Activated CD8-positive, alpha-beta T cell treated with anti-CD3 and anti-CD28 coated beads for 36 hours (primary cell): ENCODE measurements at regions of chr19 and their contacts with region 1.

Region 1: DNA sequence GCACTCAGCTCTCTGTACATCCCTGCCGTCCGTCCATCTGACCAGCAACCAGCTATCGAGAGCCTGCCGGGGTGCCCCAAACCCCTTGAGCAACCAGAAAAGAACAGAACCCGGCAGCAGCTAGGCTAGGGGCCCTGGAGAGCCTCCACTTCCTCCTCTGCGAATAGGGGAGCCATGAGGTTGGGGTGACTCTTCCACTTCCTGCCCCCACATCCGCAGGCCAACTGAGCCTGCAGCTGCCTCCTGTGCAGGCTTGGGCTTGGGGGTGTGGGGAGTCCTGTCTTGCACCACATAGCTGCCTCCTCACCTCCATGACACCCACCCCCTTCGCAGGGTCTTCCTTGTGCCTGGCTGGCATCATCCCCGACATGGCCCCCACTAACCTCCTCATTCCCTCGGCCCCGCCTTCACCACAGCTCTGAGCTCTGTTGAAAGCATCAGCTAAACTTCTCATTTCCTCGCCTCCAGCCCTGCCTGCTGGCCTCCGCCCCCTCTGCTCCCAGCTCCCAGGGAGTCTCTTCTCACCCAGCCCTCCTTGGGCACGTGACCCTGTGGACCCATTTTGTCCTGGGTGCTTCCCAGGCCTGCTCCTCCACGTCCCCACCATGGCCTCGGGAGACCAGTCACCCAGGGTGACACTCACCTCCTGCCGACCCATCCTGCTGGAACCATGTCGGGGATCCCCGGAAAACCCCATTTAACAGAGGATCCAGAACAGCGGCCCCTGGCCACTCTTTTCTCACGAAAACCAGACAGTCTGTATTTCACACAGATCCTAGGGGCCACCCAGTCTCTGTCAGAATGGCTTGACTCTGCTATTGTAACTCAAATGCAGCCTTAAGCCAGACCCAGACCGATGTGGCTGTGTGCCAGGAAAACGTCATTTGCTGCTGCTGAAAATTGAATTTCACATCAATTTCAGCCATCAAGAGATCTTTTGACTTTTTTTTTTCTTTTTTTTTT is 50.4 kb downstream of the MYO9B start:
- DNase-seq: peak; percentile 84
- ATAC-seq: peak; percentile 87
- H3K4me3 Mint-ChIP-seq: peak overlapping the region; percentile 63
- H3K27ac Mint-ChIP-seq: peak overlapping the region; percentile 91
- H3K4me1 Mint-ChIP-seq: peaks cover 42% of the 10 kb centered on the region
- H3K27me3 Mint-ChIP-seq: no peaks in the 10 kb centered on the region
- CTCF ChIP-seq: no peak

Region 2: DNA sequence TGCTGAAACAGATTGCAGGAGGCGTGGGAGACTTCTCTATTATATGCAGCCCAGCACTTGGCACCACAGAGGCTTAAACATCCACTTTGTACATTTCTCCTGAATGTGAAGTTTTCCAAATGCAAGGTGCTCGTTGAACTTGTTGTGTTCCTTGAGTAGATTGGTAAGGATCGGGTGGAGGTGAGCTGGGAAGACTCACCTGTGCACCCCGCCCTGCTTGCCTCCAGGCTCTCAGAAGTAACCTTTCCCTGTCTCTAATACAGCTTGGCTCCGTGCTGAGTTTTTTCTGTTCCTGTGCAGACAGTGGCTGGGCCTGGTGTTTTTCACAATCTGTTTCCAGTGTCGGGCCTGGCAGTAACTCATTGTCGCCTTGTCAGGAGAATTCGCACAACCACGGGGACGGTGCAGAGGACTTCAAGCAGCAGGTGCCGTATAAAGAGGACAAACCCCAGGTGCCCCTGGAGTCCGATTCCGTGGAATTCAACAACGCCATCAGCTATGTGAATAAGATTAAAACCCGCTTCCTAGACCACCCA is 284.5 kb before region 1 on chr19:
- CTCF ChIA-PET with region 1: no interaction called
- POLR2A ChIA-PET with region 1: no interaction called
- intact Hi-C with region 1: no loop called
- DNase-seq: no peak
- ATAC-seq: no peak
- H3K4me3 Mint-ChIP-seq: no peak overlapping the region
- H3K27ac Mint-ChIP-seq: no peak overlapping the region
- H3K4me1 Mint-ChIP-seq: peaks cover 6% of the 10 kb centered on the region
- H3K27me3 Mint-ChIP-seq: no peaks in the 10 kb centered on the region
- CTCF ChIP-seq: no peak

Region 3: GRCh38 chr19:17090583-17090982 is 35.4 kb before region 1 on chr19:
- CTCF ChIA-PET with region 1: interaction called, 3 read pairs
- POLR2A ChIA-PET with region 1: no interaction called
- intact Hi-C with region 1: loop called (anchors 5 kb)
- DNase-seq: peak; percentile 82
- ATAC-seq: peak; percentile 92
- H3K4me3 Mint-ChIP-seq: peak overlapping the region; percentile 4
- H3K27ac Mint-ChIP-seq: peak overlapping the region; percentile 85
- H3K4me1 Mint-ChIP-seq: peaks cover 46% of the 10 kb centered on the region
- H3K27me3 Mint-ChIP-seq: no peaks in the 10 kb centered on the region
- CTCF ChIP-seq: no peak

Region 4: DNA sequence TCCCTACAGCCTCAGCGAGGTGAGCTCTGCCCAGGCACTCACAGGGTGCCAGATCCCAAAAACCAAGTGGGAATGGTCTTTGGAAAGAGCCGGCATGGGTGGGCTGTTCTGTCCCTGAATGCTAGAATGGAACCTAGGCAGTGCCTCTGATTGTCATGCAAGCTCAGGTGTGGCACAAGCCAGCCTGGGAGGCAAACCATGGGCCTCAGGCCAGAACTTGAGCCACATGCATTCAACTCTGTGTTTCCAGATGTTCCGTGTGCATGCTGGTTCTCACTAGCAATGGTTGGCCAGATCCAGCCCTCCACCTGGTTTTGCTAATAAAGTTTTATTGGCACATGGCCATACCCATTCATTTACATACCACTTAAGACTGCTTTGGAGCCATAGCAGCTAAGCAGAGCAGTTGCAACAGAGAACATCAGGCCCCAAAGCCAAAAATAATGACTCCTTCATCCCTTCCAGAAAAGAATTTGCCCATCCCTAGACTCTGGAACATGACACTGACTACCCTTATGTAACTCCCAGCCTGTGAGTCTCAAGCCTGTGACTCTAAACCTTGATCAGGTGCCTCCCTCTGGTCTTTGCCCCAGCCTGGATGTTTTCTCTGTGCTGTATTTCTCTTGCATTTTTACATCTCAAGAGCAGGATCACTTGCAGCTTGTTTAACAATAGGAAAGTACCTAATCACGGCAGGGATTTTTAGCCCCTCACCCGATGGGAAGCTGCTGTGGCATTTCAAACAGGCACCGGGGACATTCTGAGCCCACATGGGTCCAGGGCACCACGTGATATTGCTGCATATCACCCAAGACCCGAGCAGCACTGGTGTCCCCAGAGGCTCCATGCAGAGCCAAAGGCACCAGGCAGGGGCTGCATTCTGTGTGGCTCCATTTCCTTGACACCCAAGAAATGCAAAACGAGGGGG is 33.7 kb after region 1 on chr19:
- CTCF ChIA-PET with region 1: no interaction called
- POLR2A ChIA-PET with region 1: no interaction called
- intact Hi-C with region 1: no loop called
- DNase-seq: no peak
- ATAC-seq: no peak
- H3K4me3 Mint-ChIP-seq: no peak overlapping the region
- H3K27ac Mint-ChIP-seq: no peak overlapping the region
- H3K4me1 Mint-ChIP-seq: no peaks in the 10 kb centered on the region
- H3K27me3 Mint-ChIP-seq: no peaks in the 10 kb centered on the region
- CTCF ChIP-seq: no peak

Region 5: DNA sequence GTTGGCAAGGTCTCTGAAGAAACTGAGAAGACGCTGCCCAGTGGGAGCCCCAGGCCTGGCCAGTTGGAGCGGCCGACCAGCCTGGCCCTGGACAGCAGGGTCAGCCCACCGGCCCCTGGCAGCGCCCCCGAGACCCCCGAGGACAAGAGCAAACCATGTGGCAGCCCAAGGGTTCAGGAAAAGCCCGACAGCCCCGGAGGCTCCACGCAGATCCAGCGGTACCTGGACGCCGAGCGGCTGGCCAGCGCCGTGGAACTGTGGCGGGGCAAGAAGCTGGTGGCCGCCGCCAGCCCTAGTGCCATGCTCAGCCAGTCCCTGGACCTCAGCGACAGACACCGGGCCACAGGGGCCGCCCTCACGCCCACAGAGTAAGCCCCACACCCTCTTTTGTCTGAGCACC is 69.1 kb after region 1 on chr19:
- CTCF ChIA-PET with region 1: no interaction called
- POLR2A ChIA-PET with region 1: no interaction called
- intact Hi-C with region 1: no loop called
- DNase-seq: no peak
- ATAC-seq: no peak
- H3K4me3 Mint-ChIP-seq: no peak overlapping the region
- H3K27ac Mint-ChIP-seq: no peak overlapping the region
- H3K4me1 Mint-ChIP-seq: no peaks in the 10 kb centered on the region
- H3K27me3 Mint-ChIP-seq: no peaks in the 10 kb centered on the region
- CTCF ChIP-seq: no peak